A549 (cell line): ENCODE measurements at regions of chr7 and their contacts with region 1.

Region 1: DNA sequence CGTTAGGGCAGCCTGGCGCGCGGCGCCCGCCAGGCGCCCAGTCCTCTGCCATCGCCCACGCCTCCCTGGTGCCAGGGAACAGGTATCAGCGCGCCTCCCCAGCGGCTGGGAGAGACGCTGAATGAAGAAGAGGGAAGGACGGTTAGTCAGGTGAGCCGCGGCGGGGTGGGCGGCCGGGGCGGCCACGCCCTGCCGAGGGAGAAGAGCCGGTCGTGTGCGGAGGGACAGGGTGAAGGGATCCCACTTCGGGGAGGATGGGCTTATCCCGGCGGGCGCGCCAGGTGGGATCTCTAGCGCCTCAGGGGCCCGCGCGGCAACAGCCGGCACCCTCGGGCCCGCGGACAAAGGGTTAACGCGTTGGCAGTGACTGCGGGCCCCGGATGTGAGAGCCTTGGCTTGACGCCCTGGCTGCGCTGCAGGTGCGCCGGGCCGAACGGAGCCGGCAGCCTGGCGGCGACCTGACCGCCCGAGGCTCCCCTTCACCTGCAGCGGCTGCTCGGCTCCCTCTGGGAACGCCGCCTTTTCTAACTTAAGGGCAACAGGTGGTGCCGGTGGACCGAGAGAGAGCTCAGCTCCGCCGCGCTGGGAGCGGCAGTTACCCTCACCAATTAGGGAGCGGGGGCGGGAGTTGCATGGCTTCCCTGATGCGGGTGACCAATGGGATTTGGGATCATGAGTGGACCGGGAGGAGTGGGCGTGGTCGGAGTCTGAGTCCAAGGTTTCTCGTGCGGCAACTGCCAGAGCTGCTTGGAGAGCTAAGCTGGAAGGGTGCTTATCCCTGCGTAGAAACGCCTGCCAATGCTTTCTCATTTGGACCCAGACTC is at the start of gene ARL4A:
- DNase-seq: peak; percentile 98
- ATAC-seq: peak; percentile 84 to 90
- H3K4me3 ChIP-seq: peak within 1 kb of the TSS; percentile 92
- H3K27ac ChIP-seq: peak within 1 kb of the TSS; percentile 98 to 99
- H3K4me1 ChIP-seq: peaks cover 42% of the 10 kb centered on the region; the same call in 2 of the 3 replicates
- CTCF ChIP-seq: peak; percentile 46
- EP300 ChIP-seq: no peak
- POLR2A ChIP-seq: peak; percentile 87
- RAD21 ChIP-seq: peak; percentile 79 to 94
- polyA plus RNA-seq, gene ARL4A: 58.9 and 76.1 TPM in 2 replicates

Region 2: GRCh38 chr7:12638851-12639467 is 48.1 kb before region 1 on chr7:
- CTCF ChIA-PET with region 1: interaction called, 42 read pairs
- POLR2A ChIA-PET with region 1: interaction called, 6 read pairs
- DNase-seq: peak; percentile 22 to 46
- ATAC-seq: peak; percentile 48 to 71; a peak in 3 of 6 replicates
- H3K4me3 ChIP-seq: no peak overlapping the region
- H3K27ac ChIP-seq: peak overlapping the region; percentile 23 to 64; a peak in 3 of 6 replicates
- H3K4me1 ChIP-seq: peaks cover 24% of the 10 kb centered on the region; the same call in 2 of the 3 replicates
- CTCF ChIP-seq: peak; percentile 77
- EP300 ChIP-seq: no peak
- POLR2A ChIP-seq: no peak
- RAD21 ChIP-seq: peak; percentile 88 to 90

Region 3: DNA sequence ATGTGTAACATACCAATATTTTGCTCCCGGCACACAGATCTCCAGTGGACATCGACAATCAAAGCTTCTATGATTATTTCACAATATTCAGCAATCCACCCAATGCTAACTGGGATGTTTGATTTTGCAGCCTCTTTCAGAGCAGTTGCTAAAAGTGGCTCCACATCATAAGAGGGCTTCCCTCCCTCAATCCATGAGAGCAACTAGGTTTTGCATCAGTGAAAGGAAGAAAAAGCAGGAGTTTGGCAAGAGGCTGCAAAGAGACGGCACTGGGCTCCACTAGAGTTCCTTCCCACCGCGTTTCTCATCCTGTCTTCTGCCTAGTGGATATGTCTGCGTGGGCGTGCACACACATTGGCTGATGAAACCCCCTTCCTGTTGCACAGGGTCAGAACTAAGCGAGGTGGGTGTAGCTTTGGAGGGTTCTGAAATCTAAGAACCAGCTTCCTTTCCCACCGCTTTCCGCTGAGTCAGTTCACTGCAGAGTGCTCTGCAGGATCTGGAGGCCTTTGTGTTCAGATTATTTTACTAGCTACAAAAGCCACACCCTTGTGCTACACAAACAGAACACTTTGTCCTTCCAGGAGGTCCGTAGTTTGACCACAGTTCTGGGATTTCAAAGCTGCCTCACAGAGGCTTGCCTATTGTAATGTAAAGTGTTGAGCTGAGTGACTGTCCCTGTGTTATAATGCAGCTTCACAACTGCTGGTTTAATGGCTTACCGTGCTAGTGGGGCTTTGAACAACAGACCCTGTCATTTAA is 28.4 kb after region 1 on chr7:
- CTCF ChIA-PET with region 1: interaction called, 57 read pairs
- POLR2A ChIA-PET with region 1: interaction called, 43 read pairs
- DNase-seq: peak; percentile 60 to 98
- ATAC-seq: peak; percentile 92 to 94
- H3K4me3 ChIP-seq: peak overlapping the region; percentile 44
- H3K27ac ChIP-seq: peak overlapping the region; percentile 91 to 96
- H3K4me1 ChIP-seq: peaks cover 73% of the 10 kb centered on the region
- CTCF ChIP-seq: no peak
- EP300 ChIP-seq: peak; percentile 24 to 75; a peak in 2 of 5 replicates
- POLR2A ChIP-seq: peak; percentile 40
- RAD21 ChIP-seq: peak in 1 of 2 experiments; percentile 49; a peak in 4 of 5 replicates

Region 4: DNA sequence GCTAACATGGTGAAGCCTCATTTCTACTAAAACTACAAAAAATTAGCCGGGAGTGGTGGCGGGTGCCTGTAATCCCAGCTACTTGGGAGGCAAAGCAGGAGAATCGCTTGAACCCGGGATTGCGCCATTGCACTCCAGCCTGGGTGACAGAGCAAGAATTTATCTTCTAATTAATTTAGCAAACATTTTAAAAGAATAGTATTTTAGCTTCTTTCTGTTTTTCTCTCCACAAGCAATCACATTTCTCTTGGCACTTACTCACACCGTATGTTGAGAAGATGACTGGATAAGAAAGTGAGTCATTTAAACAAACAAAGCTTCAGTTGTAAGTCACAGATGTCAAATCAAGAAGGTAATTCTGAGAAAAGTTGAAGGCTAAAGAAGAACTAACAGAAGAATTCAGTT is 264.3 kb after region 1 on chr7:
- CTCF ChIA-PET with region 1: interaction called, 19 read pairs
- POLR2A ChIA-PET with region 1: interaction called, 3 read pairs
- DNase-seq: peak; percentile 61 to 62
- ATAC-seq: peak; percentile 68 to 80; a peak in 3 of 6 replicates
- H3K4me3 ChIP-seq: no peak overlapping the region
- H3K27ac ChIP-seq: peak overlapping the region in 1 of 2 experiments; percentile 70; a peak in 3 of 6 replicates
- H3K4me1 ChIP-seq: peaks cover 24% of the 10 kb centered on the region
- CTCF ChIP-seq: no peak
- EP300 ChIP-seq: no peak
- POLR2A ChIP-seq: no peak
- RAD21 ChIP-seq: 0 out of 5 replicates have a peak, but pooled peaks of 1 of the 2 experiments have one; percentile 25

Region 5: DNA sequence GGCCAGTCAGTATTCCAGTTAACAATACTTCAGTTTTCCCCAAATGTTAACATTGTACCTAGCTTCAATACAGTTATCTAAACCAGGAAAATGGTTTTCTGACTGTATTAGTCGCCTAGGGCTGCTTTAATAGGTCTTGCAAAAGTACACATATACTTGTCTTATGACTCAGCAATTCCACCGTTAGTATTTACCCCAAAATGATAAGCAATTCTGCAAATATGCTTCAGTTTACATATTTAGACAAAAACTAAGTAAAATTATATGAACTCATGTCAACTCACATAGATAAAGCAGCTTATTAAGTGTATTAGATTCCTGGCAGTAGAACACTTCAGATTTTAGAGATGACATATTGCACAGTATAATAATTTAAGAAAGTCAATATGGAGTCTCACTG is 363.6 kb after region 1 on chr7:
- CTCF ChIA-PET with region 1: interaction called, 25 read pairs
- POLR2A ChIA-PET with region 1: no interaction called
- DNase-seq: peak; percentile 15 to 66
- ATAC-seq: peak in 1 of 2 experiments; percentile 81; a peak in 3 of 6 replicates
- H3K4me3 ChIP-seq: no peak overlapping the region
- H3K27ac ChIP-seq: peak overlapping the region; percentile 49 to 63
- H3K4me1 ChIP-seq: peaks cover 37% of the 10 kb centered on the region
- CTCF ChIP-seq: no peak
- EP300 ChIP-seq: no peak
- POLR2A ChIP-seq: no peak
- RAD21 ChIP-seq: no peak

Region 6: GRCh38 chr7:13179102-13179501 is 492.0 kb after region 1 on chr7:
- CTCF ChIA-PET with region 1: interaction called, 17 read pairs
- POLR2A ChIA-PET with region 1: no interaction called
- DNase-seq: peak in 1 of 2 experiments; percentile 18
- ATAC-seq: peak; percentile 47 to 58; a peak in 3 of 6 replicates
- H3K4me3 ChIP-seq: no peak overlapping the region
- H3K27ac ChIP-seq: no peak overlapping the region
- H3K4me1 ChIP-seq: peaks cover 24% of the 10 kb centered on the region
- CTCF ChIP-seq: peak; percentile 30; the same call in 2 of the 3 replicates
- EP300 ChIP-seq: no peak
- POLR2A ChIP-seq: no peak
- RAD21 ChIP-seq: peak; percentile 51 to 54; a peak in 4 of 5 replicates